ENCODE measurements at regions of chr9 and their contacts with region 1.

Region 1: GRCh38 chr9:763692-764524 is 77.6 kb upstream of the DMRT1 start:
- DNase-seq: peak; percentile 66 to 74
- H3K4me3 ChIP-seq: no peak overlapping the region
- H3K27ac ChIP-seq: no peak overlapping the region
- H3K4me1 ChIP-seq: no peaks in the 10 kb centered on the region
- H3K27me3 ChIP-seq: no peaks in the 10 kb centered on the region
- CTCF ChIP-seq: peak; percentile 89 to 97 (median 94)
- POLR2A ChIP-seq: no peak

Region 2: GRCh38 chr9:385818-386398 is 378.0 kb before region 1 on chr9:
- intact Hi-C with region 1: loop called (anchors 10 kb)
- DNase-seq: peak; percentile 44 to 58
- H3K4me3 ChIP-seq: no peak overlapping the region
- H3K27ac ChIP-seq: no peak overlapping the region
- H3K4me1 ChIP-seq: no peaks in the 10 kb centered on the region
- H3K27me3 ChIP-seq: no peaks in the 10 kb centered on the region
- CTCF ChIP-seq: peak; percentile 75 to 91 (median 84)
- POLR2A ChIP-seq: no peak

Region 3: DNA sequence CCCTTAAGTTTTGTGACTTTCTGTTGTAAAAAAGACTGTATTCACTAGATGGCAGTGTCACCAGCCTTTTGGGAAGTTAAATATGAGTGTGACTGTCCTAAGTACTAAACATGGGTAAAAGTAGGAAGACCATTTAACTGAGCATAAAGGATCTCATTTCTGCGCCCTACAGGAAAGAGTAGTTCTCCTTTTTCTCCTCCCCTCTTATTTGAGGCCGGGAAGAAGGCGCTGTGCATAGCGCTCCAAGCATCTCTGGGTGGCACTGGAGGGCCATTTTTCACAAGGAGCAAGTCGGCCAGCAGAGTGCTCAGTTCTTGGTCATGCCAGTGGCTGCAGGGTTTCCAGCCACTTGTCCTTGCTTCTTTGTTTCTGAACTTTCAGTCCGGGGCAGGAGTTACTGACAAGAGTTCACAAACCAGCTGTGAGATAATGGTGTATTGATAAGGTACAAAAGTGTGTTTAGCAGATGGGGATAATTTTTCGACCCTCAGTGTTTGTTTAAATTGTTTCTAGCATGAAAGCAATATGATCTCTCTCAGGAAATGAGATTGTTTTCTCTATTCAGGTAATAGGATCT is 150.0 kb before region 1 on chr9:
- intact Hi-C with region 1: loop called (anchors 5 kb)
- DNase-seq: peak; percentile 74 to 82
- H3K4me3 ChIP-seq: no peak overlapping the region
- H3K27ac ChIP-seq: peak overlapping the region; percentile 58 to 80
- H3K4me1 ChIP-seq: no peaks in the 10 kb centered on the region
- H3K27me3 ChIP-seq: no peaks in the 10 kb centered on the region
- CTCF ChIP-seq: peak; percentile 80 to 90 (median 88)
- POLR2A ChIP-seq: peak in 1 of 2 donors; percentile 5

Region 4: DNA sequence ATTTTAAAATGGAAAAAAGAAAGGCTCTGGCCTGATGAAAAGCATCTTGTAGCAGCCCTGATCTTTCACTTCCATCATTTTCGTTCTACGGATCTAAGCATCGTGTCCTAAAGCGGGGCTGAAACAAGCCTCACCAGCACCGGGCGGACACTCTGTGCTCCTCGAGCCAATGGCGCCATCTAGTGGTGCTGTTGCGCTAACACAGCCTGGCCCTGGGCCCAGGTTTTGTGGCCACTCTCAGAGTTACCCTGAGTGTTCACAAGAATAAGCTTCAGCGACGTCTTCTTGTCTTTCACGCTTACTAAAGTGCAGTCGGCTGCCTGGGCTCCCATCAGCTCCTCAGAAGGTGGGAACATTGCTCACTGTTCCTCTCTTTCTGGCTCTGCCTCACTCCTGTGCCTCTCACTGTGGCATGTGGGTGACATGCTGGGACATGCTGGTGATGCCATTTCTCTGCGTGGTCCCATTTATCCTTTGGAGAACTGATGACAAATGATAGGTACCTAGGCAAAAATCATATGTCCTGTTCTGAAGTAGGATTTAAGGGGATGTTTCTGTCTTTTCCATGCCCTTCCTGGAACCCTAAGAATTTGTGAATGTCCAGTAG is 245.3 kb after region 1 on chr9:
- intact Hi-C with region 1: no loop called
- DNase-seq: peak; percentile 66 to 80
- H3K4me3 ChIP-seq: no peak overlapping the region
- H3K27ac ChIP-seq: no peak overlapping the region
- H3K4me1 ChIP-seq: no peaks in the 10 kb centered on the region
- H3K27me3 ChIP-seq: no peaks in the 10 kb centered on the region
- CTCF ChIP-seq: peak; percentile 82 to 90 (median 84)
- POLR2A ChIP-seq: no peak